Tibial artery (tissue), 4 donors: ENCODE measurements at regions of chr3 and their contacts with region 1.

Region 1: GRCh38 chr3:12663936-12664908 is at the start of gene RAF1:
- DNase-seq: peak; percentile 98 to 99
- H3K4me3 ChIP-seq: peak within 1 kb of the TSS; percentile 92 to 99
- H3K27ac ChIP-seq: peak within 1 kb of the TSS; percentile 99 to 100
- H3K4me1 ChIP-seq: peaks cover 0 to 33% (median 23%) of the 10 kb centered on the region in 4 donors
- H3K27me3 ChIP-seq: no peaks in the 10 kb centered on the region
- CTCF ChIP-seq: no peak

Region 2: GRCh38 chr3:12107071-12107713 is 557.0 kb before region 1 on chr3:
- intact Hi-C with region 1: no loop called
- DNase-seq: no peak
- H3K4me3 ChIP-seq: no peak overlapping the region
- H3K27ac ChIP-seq: no peak overlapping the region
- H3K4me1 ChIP-seq: no peaks in the 10 kb centered on the region
- H3K27me3 ChIP-seq: no peaks in the 10 kb centered on the region
- CTCF ChIP-seq: no peak

Region 3: GRCh38 chr3:12689993-12690617 is 25.9 kb after region 1 on chr3:
- intact Hi-C with region 1: loop called (anchors 1 kb)
- DNase-seq: no peak
- H3K4me3 ChIP-seq: no peak overlapping the region
- H3K27ac ChIP-seq: no peak overlapping the region
- H3K4me1 ChIP-seq: peaks cover 0 to 21% (median 3%) of the 10 kb centered on the region in 4 donors
- H3K27me3 ChIP-seq: no peaks in the 10 kb centered on the region
- CTCF ChIP-seq: no peak